SK-N-SH (cell line): ENCODE measurements at regions of chr15 and their contacts with region 1.

Region 1: GRCh38 chr15:92533298-92533697 is 122.3 kb downstream of the FAM174B start:
- DNase-seq: no peak
- H3K4me3 ChIP-seq: no peak overlapping the region
- H3K27ac ChIP-seq: no peak overlapping the region
- H3K4me1 ChIP-seq: peaks cover 0 to 3% of the 10 kb centered on the region in 2 experiments; a peak in 2 of 4 replicates
- H3K27me3 ChIP-seq: no peaks in the 10 kb centered on the region
- CTCF ChIP-seq: no peak
- EP300 ChIP-seq: no peak
- RAD21 ChIP-seq: no peak

Region 2: DNA sequence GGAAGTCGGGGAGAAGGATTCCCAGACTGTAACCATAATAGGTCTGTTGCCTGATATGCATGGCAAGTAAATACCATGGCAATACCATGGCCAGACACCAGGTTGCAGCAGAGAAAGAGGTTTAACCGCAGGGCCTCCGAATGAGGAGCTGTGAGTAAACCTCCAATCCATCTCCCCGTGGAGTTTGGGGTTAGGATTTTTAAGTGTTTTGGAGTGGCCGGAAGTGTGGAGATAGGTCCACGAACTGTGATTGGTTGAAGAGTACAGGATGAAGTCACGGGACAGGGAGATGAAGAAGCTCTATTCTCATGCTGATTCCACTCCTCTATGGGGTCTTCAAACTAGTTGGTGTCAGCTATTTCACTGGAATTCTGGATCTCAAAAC is 11.7 kb before region 1 on chr15:
- CTCF ChIA-PET with region 1: interaction called, 21 read pairs
- POLR2A ChIA-PET with region 1: no interaction called
- DNase-seq: peak; percentile 64
- H3K4me3 ChIP-seq: no peak overlapping the region; a peak in 1 of 4 replicates
- H3K27ac ChIP-seq: no peak overlapping the region
- H3K4me1 ChIP-seq: no peaks in the 10 kb centered on the region
- H3K27me3 ChIP-seq: no peaks in the 10 kb centered on the region
- CTCF ChIP-seq: peak; percentile 19; the same call in 1 of the 2 replicates
- EP300 ChIP-seq: no peak
- RAD21 ChIP-seq: peak; percentile 90